CD8-positive, alpha-beta T cell (primary cell): ENCODE measurements at regions of chr10 and their contacts with region 1.

Region 1: DNA sequence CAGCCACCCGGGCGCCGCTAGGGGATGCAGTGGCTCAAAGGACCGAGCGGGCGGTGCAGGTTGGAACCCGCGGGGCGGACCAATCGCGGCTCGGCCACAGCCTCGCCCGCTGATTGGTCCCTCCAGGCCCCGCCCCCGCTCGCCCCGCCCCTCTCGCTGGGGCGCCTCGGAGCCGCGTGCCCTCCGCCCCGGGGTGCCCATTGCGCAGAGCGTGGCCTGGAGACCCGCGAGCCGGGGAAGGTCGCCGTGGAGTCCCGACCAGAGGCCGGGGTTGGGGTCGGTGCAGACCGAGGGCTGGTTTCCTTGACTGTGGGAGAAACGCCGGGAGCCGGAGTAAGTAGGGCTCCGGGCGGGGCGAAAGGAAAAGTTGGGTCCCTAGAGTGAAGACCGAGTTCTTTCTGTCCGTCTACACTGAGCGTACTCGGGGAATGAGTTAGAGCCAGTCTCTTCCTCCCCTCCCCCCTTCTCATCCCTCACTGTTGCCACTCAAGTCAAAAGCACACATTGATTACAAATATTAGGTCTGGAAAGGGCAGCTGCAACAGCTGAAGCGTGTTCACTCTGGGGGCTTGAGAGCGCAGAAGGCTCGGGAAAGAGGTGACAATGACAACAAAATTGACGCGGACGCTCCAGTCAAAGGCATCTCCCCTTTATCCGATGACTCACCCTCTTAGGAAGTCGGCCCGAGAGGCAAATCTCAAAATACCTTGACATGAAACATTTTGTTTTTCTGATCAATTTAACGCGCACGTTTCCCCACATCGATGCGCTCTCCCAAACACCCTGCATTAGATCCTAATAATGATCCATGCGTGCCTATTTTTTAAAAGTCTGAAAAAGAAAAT is 820 bp upstream of the GATA3 start:
- DNase-seq: peak; percentile 85 to 97 (median 95)
- ATAC-seq: peak; percentile 60
- H3K4me3 ChIP-seq: peak overlapping the region; percentile 87 to 90
- H3K4me3 Mint-ChIP-seq: peak overlapping the region; percentile 83
- H3K27ac ChIP-seq: peak overlapping the region; percentile 56 to 65
- H3K27ac Mint-ChIP-seq: peak overlapping the region; percentile 92
- H3K4me1 ChIP-seq: peaks cover 65% of the 10 kb centered on the region
- H3K4me1 Mint-ChIP-seq: peaks cover 49% of the 10 kb centered on the region
- H3K27me3 ChIP-seq: peaks cover 35 to 39% of the 10 kb centered on the region in 2 experiments
- H3K27me3 Mint-ChIP-seq: peaks cover 23% of the 10 kb centered on the region
- CTCF ChIP-seq: no peak

Region 2: GRCh38 chr10:8033812-8034465 is 19.7 kb before region 1 on chr10:
- CTCF ChIA-PET with region 1: interaction called, 5 read pairs
- POLR2A ChIA-PET with region 1: interaction called, 3 read pairs
- intact Hi-C with region 1: loop called in 1 of 2 experiments (anchors 1 kb)
- DNase-seq: peak in 3 of 9 experiments; percentile 9 to 34 (median 29)
- ATAC-seq: peak; percentile 44
- H3K4me3 ChIP-seq: no peak overlapping the region
- H3K4me3 Mint-ChIP-seq: peak overlapping the region; percentile 15
- H3K27ac ChIP-seq: no peak overlapping the region
- H3K27ac Mint-ChIP-seq: no peak overlapping the region
- H3K4me1 ChIP-seq: peaks cover 23% of the 10 kb centered on the region
- H3K4me1 Mint-ChIP-seq: peaks cover 20% of the 10 kb centered on the region
- H3K27me3 ChIP-seq: peaks cover 48 to 60% of the 10 kb centered on the region in 2 experiments
- H3K27me3 Mint-ChIP-seq: peaks cover 55% of the 10 kb centered on the region
- CTCF ChIP-seq: no peak

Region 3: GRCh38 chr10:8444630-8445029 is 391.0 kb after region 1 on chr10:
- CTCF ChIA-PET with region 1: interaction called, 8 read pairs
- POLR2A ChIA-PET with region 1: interaction called, 4 read pairs
- intact Hi-C with region 1: loop called (anchors 1 to 5 kb)
- DNase-seq: peak; percentile 9 to 82 (median 65)
- ATAC-seq: peak; percentile 100
- H3K4me3 ChIP-seq: no peak overlapping the region
- H3K4me3 Mint-ChIP-seq: no peak overlapping the region
- H3K27ac ChIP-seq: no peak overlapping the region
- H3K27ac Mint-ChIP-seq: no peak overlapping the region
- H3K4me1 ChIP-seq: peaks cover 6% of the 10 kb centered on the region
- H3K4me1 Mint-ChIP-seq: peaks cover 10% of the 10 kb centered on the region
- H3K27me3 ChIP-seq: no peaks in the 10 kb centered on the region
- H3K27me3 Mint-ChIP-seq: peaks cover 4% of the 10 kb centered on the region
- CTCF ChIP-seq: no peak

Region 4: DNA sequence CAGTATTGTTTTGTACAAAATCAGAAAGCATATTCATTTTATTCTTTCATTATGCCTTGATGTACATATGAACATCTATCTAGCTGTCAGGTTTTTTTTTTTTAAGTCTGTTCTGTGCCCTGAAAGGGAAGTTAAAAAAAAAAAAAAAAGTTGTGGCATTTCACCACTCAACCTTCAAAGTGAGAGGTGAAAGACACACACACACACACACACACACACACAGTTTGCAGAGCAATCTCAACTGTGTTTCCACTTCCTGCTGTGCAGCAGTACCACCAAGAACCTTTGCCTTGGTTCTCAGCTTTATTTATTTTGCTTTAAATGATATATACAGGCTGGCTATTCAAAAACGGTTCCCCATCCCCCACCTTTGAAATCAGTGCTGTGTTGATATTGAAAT is 956.4 kb after region 1 on chr10:
- CTCF ChIA-PET with region 1: no interaction called
- POLR2A ChIA-PET with region 1: no interaction called
- intact Hi-C with region 1: loop called in 1 of 2 experiments (anchors 5 kb)
- DNase-seq: peak in 8 of 9 experiments; percentile 28 to 83 (median 59)
- ATAC-seq: peak; percentile 84
- H3K4me3 ChIP-seq: no peak overlapping the region
- H3K4me3 Mint-ChIP-seq: peak overlapping the region; percentile 45
- H3K27ac ChIP-seq: no peak overlapping the region
- H3K27ac Mint-ChIP-seq: peak overlapping the region; percentile 58
- H3K4me1 ChIP-seq: peaks cover 29% of the 10 kb centered on the region
- H3K4me1 Mint-ChIP-seq: peaks cover 46% of the 10 kb centered on the region
- H3K27me3 ChIP-seq: no peaks in the 10 kb centered on the region
- H3K27me3 Mint-ChIP-seq: no peaks in the 10 kb centered on the region
- CTCF ChIP-seq: no peak

Region 5: DNA sequence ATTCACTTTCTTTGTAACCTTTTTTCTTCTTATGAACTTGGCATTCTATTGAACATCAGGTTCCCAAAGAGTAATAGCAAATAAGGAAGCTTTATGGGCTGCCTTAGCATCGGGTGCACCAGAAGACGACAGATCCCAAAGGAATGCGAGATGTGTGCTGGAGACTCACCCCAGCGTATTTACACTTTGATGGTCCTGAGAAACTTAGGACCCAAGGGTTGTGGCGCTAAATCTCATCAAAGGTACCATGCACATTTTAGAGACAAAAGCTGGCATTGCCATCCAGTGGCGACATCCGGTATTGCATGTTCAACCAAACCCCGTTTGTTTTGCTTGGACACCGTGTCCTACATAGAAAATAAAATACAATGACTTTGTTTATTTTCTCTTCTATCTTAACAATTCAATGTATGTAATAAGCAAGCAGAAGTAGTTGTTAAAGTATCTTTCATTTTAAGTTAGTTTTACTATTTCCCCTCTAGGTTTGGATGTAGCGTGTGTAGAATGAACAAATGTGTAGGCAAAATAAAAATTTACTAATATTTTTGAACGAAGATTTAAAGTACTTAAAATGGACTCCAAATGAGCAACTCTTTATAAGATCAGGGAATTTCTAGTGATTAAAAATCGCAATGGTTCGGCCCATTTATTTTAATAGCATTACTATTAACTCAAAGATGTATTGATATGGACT is 1155.6 kb after region 1 on chr10:
- CTCF ChIA-PET with region 1: no interaction called
- POLR2A ChIA-PET with region 1: no interaction called
- intact Hi-C with region 1: loop called in 1 of 2 experiments (anchors 5 kb)
- DNase-seq: peak; percentile 51 to 84 (median 69)
- ATAC-seq: peak; percentile 64
- H3K4me3 ChIP-seq: no peak overlapping the region
- H3K4me3 Mint-ChIP-seq: no peak overlapping the region
- H3K27ac ChIP-seq: no peak overlapping the region
- H3K27ac Mint-ChIP-seq: no peak overlapping the region
- H3K4me1 ChIP-seq: peaks cover 6% of the 10 kb centered on the region
- H3K4me1 Mint-ChIP-seq: peaks cover 5% of the 10 kb centered on the region
- H3K27me3 ChIP-seq: no peaks in the 10 kb centered on the region
- H3K27me3 Mint-ChIP-seq: peaks cover 6% of the 10 kb centered on the region
- CTCF ChIP-seq: peak; percentile 96